ENCODE measurements at regions of chr1 and their contacts with region 1.

Region 1: DNA sequence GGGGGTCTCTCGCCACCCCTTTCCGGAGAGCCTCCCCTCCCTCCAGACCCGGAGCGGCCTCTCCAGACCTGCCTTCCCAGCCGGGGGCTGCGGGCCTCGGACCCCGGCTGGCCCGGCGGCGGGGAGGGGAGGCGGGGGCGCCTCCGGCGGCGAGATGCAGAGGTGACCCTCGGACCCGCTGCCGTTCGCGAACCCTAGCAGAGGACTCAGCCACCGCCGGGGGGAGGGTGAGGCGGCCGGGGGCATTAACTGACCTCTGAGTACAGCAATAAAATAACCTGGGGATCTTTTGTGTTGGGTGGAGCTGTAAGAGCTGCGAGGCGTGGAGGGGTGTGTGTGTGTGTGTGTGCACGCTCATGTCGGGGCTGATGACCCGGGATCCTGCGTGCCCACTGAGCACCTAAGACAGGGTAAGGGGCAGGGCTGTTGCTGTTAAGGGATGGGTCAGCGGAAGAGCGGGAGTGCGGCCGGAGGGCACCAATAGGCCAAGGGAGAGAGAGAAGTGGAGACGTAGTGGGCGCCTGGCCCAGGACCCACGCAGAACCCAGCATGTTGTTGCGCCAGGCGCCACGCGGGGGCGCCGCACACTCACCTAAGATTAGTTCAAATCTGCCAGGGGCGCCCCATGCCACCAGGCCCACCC is 6.3 kb downstream of the HAPLN2 start:
- DNase-seq: peak; percentile 33 to 61 (median 51)
- H3K4me3 ChIP-seq: no peak overlapping the region
- H3K4me3 Mint-ChIP-seq: peak overlapping the region; percentile 59 to 92
- H3K27ac ChIP-seq: no peak overlapping the region
- H3K27ac Mint-ChIP-seq: no peak overlapping the region
- H3K4me1 ChIP-seq: peaks cover 14 to 22% of the 10 kb centered on the region in 2 donors
- H3K4me1 Mint-ChIP-seq: peaks cover 10% of the 10 kb centered on the region
- H3K27me3 ChIP-seq: peaks cover 49 to 77% of the 10 kb centered on the region in 2 donors
- H3K27me3 Mint-ChIP-seq: peaks cover 64 to 90% (median 85%) of the 10 kb centered on the region in 3 donors
- CTCF ChIP-seq: peak; percentile 95

Region 2: DNA sequence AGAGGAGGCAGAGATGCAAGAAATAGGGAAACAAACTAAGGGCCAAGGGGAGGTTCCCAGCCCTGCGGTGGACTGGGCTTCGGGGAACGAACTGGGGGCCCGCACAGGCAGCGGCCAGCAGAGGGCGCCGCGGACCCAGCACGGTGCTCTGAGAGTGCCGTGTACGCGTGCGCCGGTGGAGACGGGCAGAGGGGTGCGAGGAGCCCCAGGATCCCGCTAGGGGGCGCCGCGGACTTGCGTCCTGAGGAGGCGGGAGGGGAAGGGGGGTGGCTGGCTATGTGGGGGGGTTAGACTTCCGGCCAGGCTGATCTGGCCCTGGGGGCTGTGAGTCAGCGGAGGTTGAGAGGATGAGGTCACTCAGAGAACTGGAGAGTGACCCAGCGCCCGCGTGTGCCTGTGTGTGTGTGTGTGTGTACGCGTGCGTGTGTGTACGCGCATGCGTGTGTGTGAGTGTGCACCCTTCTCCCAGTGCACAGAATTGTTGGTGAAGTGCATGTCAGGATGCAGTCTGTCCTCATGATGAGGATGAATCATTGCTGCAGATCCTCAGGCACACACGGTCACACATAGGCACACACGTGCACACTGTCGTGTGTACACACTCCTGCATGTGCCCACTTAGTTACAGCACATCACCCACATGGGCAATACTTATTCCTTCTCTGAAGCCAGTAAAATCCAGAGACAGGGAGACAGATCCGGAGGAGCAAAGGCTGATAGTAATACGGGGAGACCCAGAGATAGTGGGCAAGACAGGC is 34.6 kb after region 1 on chr1:
- intact Hi-C with region 1: loop called in 1 of 2 experiments (anchors 2 kb)
- DNase-seq: peak; percentile 91 to 98 (median 95)
- H3K4me3 ChIP-seq: no peak overlapping the region
- H3K4me3 Mint-ChIP-seq: peak overlapping the region; percentile 51 to 74
- H3K27ac ChIP-seq: no peak overlapping the region
- H3K27ac Mint-ChIP-seq: peak overlapping the region; percentile 74 to 85 (median 82)
- H3K4me1 ChIP-seq: peaks cover 73 to 80% of the 10 kb centered on the region in 2 donors
- H3K4me1 Mint-ChIP-seq: peaks cover 74% of the 10 kb centered on the region
- H3K27me3 ChIP-seq: peaks cover 22 to 40% of the 10 kb centered on the region in 2 donors
- H3K27me3 Mint-ChIP-seq: peaks cover 42 to 59% (median 45%) of the 10 kb centered on the region in 3 donors
- CTCF ChIP-seq: peak; percentile 99

Region 3: DNA sequence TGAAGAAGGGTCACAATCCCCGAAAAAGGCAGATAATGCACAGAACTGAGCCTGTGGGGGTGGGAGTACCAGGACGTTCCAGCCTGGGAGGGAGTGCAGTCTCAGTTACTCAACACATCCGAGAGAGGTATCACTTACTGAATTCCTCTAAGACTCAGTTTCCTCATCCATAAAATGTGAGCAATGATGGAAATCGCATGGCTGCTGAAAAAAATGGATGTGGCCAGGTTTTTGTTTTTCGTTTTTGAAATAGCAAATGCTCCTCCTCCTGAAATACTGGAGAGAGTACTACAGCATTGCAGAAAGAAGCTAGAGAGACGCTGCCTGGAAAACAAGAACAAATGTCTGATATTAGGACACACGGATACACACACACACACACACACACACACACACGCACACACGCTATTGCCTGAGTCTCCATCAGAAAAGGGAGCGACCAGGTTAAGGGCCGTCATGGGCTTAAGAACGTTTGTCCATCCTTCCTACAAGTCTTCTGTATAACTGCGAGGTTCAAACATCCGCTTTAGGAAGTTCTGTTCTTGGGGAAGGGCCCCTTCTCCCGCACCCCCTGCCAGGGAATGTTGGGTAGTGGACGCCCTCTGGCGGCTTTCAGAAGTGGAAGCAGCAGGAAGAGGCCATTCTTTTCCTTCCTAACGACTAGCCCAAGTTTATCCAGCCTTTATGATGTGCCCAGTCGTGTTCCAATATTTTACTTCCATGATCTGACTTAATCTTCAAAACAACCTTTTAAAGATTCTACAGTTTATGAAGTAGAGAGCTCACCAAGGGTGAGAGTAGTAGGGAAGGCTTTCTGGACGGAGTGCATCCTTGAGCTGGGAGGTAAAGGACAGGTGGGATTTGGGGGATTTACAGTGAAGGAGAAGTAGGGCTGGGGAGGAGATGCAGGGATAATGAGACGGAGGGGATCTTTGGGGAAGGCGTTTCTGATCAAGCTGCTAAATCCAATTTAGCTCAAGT is 52.3 kb after region 1 on chr1:
- intact Hi-C with region 1: loop called (anchors 5 to 10 kb)
- DNase-seq: peak; percentile 35 to 77 (median 40)
- H3K4me3 ChIP-seq: no peak overlapping the region
- H3K4me3 Mint-ChIP-seq: peak overlapping the region in 1 of 2 donors; percentile 76
- H3K27ac ChIP-seq: no peak overlapping the region
- H3K27ac Mint-ChIP-seq: peak overlapping the region in 2 of 7 donors; percentile 42 to 65
- H3K4me1 ChIP-seq: peaks cover 0 to 7% of the 10 kb centered on the region in 2 donors
- H3K4me1 Mint-ChIP-seq: peaks cover 12% of the 10 kb centered on the region
- H3K27me3 ChIP-seq: peaks cover 38 to 86% of the 10 kb centered on the region in 2 donors
- H3K27me3 Mint-ChIP-seq: peaks cover 71 to 92% (median 79%) of the 10 kb centered on the region in 3 donors
- CTCF ChIP-seq: peak; percentile 82

Region 4: DNA sequence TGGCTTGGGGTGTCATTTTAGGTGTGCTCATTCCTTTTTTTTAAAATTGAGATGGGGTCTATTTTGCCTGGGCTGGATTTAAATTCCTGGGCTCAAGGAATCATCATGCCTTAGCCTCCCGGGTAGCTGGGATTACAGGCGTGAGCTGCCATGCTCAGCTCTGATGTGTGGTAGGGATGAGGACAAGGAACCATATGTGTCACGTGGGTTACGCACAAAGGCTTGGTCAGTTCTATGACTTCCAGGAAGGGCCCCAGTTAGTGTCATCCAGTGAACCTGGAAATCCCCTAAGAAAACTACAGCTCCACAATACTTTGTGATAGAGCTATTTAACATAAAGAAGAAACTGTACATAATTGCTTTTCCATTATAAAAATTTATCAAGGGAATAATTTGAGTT is 96.0 kb after region 1 on chr1:
- intact Hi-C with region 1: loop called (anchors 5 kb)
- DNase-seq: no peak
- H3K4me3 ChIP-seq: no peak overlapping the region
- H3K4me3 Mint-ChIP-seq: no peak overlapping the region
- H3K27ac ChIP-seq: no peak overlapping the region
- H3K27ac Mint-ChIP-seq: peak overlapping the region in 1 of 7 donors; percentile 35
- H3K4me1 ChIP-seq: peaks cover 16 to 18% of the 10 kb centered on the region in 2 donors
- H3K4me1 Mint-ChIP-seq: peaks cover 6% of the 10 kb centered on the region
- H3K27me3 ChIP-seq: no peaks in the 10 kb centered on the region
- H3K27me3 Mint-ChIP-seq: peaks cover 0 to 2% (median 0%) of the 10 kb centered on the region in 3 donors
- CTCF ChIP-seq: no peak

Region 5: DNA sequence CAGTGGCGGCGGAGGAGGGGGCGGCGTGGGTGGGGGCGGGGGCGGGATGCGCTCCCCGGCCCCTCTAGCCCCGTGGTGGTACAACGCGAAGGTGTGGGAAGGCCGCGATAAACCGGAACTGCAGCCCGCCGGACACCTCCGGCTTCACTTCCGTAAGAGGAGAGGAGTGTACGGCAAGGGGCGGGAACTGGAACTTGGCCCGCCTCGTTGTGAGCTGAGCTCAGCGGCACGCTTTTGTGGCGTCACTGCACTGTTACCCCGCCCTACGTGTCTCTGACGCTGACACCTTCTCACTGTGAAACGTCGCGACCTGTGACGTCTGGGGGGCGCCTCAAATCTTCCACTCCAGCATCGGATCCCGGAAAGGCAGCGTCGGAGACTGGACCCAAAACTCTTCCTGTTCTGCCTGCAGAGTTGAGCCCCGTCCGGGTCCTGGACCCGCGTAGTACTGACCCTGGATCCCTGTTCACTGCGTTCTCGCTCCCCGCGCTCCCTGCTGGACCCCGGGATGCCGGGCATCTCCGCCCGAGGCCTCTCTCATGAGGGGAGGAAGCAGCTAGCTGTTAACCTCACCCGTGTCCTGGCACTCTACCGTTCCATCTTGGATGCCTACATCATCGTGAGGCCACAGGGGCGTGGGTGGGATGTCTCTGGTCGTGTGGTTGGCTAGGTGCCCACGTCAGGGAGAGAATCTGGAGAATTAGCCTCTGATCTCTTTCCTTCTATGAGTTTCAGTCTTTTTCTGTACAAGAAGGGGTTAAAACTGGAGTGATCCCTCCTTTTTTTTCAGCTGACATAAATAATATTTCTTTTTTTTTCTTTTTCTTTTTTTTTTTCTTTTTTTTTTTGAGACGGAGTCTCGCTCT is 103.3 kb after region 1 on chr1 and contains the start of gene ISG20L2:
- intact Hi-C with region 1: loop called (anchors 5 kb)
- DNase-seq: peak; percentile 99 to 100 (median 100)
- H3K4me3 ChIP-seq: peak within 1 kb of the TSS; percentile 64 to 94 (median 89)
- H3K4me3 Mint-ChIP-seq: peak within 1 kb of the TSS; percentile 93 to 97
- H3K27ac ChIP-seq: peak within 1 kb of the TSS; percentile 69 to 98
- H3K27ac Mint-ChIP-seq: peak within 1 kb of the TSS in 5 of 7 donors; percentile 72 to 98 (median 98)
- H3K4me1 ChIP-seq: peaks cover 38 to 45% of the 10 kb centered on the region in 2 donors
- H3K4me1 Mint-ChIP-seq: peaks cover 18% of the 10 kb centered on the region
- H3K27me3 ChIP-seq: no peaks in the 10 kb centered on the region
- H3K27me3 Mint-ChIP-seq: no peaks in the 10 kb centered on the region
- CTCF ChIP-seq: no peak
- polyA plus RNA-seq, gene ISG20L2: 17.2 to 23.5 (median 18.1) TPM